ENCODE measurements at regions of chr4 and their contacts with region 1.

Region 1: GRCh38 chr4:159048166-159048886 is 54.6 kb upstream of the RAPGEF2 start:
- DNase-seq: peak; percentile 78

Region 2: DNA sequence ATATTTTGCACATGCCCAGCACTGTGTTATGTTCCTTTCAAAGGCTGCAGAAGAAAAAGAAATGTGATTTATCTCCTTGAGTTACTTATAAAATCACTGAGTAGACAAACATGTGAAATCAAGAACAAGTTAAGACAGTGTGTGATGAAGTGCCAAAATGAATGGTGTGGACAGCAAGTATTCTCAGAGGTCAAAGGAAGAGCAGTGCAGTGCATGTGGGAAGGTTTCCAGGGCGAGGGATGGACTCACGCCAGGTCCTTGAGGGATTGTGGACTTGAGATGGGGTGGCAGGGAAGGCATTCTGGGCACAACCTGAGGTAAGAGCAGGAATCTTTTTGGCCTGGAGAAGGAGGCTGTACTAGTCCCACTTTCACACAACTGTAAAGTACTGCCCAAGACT is 164.0 kb before region 1 on chr4:
- intact Hi-C with region 1: no loop called
- DNase-seq: no peak

Region 3: GRCh38 chr4:159103384-159103990 is 55.2 kb after region 1 on chr4:
- intact Hi-C with region 1: no loop called
- DNase-seq: peak; percentile 88

Region 4: GRCh38 chr4:159169404-159170302 is 121.3 kb after region 1 on chr4:
- intact Hi-C with region 1: loop called (anchors 5 kb)
- DNase-seq: no peak

Measured in cardiac septum (tissue), 1 donor.